ENCODE measurements at regions of chr6 and their contacts with region 1.

Region 1: GRCh38 chr6:106325336-106326178 is at the start of gene ATG5:
- DNase-seq: peak; percentile 99
- ATAC-seq: peak; percentile 98
- H3K4me3 ChIP-seq: peak within 1 kb of the TSS; percentile 99
- H3K4me3 Mint-ChIP-seq: peak within 1 kb of the TSS; percentile 96 to 100 (median 98)
- H3K27ac ChIP-seq: peak within 1 kb of the TSS; percentile 95
- H3K27ac Mint-ChIP-seq: peak within 1 kb of the TSS; percentile 95 to 100 (median 98)
- H3K4me1 ChIP-seq: peaks cover 16 to 24% of the 10 kb centered on the region in 2 donors
- H3K4me1 Mint-ChIP-seq: peaks cover 33 to 56% (median 46%) of the 10 kb centered on the region in 7 donors
- H3K27me3 ChIP-seq: no peaks in the 10 kb centered on the region
- H3K27me3 Mint-ChIP-seq: peaks cover 13 to 30% (median 17%) of the 10 kb centered on the region in 5 donors
- total RNA-seq, gene ATG5: 24.0 to 30.9 (median 27.0) TPM

Region 2: DNA sequence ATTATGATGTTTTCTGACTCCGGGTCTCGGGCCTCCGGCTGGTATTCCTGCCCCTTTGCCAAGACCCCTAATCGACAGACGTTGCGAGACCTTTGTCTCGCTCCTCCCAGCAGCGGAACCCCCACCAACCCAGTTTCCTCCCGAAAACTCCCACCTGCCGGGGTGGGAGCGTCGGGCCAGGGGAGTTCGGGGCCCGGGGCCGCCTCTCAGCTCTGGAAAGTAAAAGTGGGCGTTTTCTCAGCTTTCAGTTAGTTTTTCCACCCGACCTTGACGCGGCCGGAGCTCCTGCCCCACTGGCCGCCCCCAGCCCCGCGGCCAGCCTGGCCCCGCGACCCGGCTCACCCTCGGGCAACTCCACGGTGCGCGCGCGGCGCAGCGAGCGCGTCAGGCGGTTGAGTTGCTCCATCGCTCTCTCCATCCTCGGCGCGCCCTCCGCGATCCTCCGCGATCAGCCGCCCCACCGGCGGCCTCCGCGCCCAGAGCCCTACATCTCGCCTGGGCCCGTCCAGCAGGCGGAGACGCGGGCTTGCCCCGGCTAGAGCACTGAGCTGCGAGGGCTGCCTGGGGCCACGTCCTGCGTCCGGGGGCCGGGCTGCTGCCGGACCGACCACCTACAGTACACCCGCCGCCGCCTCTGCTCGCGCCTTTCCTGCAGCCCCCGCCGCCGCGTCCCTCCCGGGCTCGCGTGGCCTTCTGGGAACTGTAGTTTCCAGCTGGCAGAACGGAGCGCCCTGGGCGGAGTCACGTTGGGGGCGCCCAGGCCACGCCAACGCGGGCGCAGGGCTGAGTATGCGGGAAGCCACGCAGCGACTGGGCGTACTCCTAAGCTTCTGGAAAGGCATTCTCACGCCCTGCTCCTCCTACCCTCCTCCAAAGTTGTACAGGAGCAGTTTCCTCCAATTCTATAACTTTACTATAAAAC is 1466.1 kb before region 1 on chr6 and contains the start of gene HACE1:
- CTCF ChIA-PET with region 1: no interaction called
- POLR2A ChIA-PET with region 1: no interaction called
- intact Hi-C with region 1: loop called in 1 of 2 experiments (anchors 1 kb)
- DNase-seq: peak; percentile 75 to 91 (median 89)
- ATAC-seq: peak; percentile 98
- H3K4me3 ChIP-seq: peak within 1 kb of the TSS; percentile 79
- H3K4me3 Mint-ChIP-seq: peak within 1 kb of the TSS; percentile 87 to 95 (median 92)
- H3K27ac ChIP-seq: peak within 1 kb of the TSS; percentile 69
- H3K27ac Mint-ChIP-seq: peak within 1 kb of the TSS; percentile 18 to 92 (median 86)
- H3K4me1 ChIP-seq: peaks cover 8 to 9% of the 10 kb centered on the region in 2 donors
- H3K4me1 Mint-ChIP-seq: peaks cover 10 to 30% (median 18%) of the 10 kb centered on the region in 7 donors
- H3K27me3 ChIP-seq: no peaks in the 10 kb centered on the region
- H3K27me3 Mint-ChIP-seq: peaks cover 3 to 20% (median 13%) of the 10 kb centered on the region in 5 donors
- total RNA-seq, gene HACE1: 11.4 to 17.1 (median 16.1) TPM

Region 3: GRCh38 chr6:105992315-105992961 is 333.1 kb before region 1 on chr6:
- CTCF ChIA-PET with region 1: no interaction called
- POLR2A ChIA-PET with region 1: no interaction called
- intact Hi-C with region 1: loop called (anchors 1 kb)
- DNase-seq: peak; percentile 82 to 91 (median 89)
- ATAC-seq: peak; percentile 93
- H3K4me3 ChIP-seq: peak overlapping the region; percentile 89
- H3K4me3 Mint-ChIP-seq: peak overlapping the region; percentile 88 to 98 (median 92)
- H3K27ac ChIP-seq: peak overlapping the region; percentile 79
- H3K27ac Mint-ChIP-seq: peak overlapping the region; percentile 87 to 97 (median 93)
- H3K4me1 ChIP-seq: peaks cover 14 to 23% of the 10 kb centered on the region in 2 donors
- H3K4me1 Mint-ChIP-seq: peaks cover 16 to 58% (median 29%) of the 10 kb centered on the region in 7 donors
- H3K27me3 ChIP-seq: peaks cover 0 to 32% of the 10 kb centered on the region in 2 donors
- H3K27me3 Mint-ChIP-seq: peaks cover 48 to 73% (median 62%) of the 10 kb centered on the region in 5 donors

Region 4: DNA sequence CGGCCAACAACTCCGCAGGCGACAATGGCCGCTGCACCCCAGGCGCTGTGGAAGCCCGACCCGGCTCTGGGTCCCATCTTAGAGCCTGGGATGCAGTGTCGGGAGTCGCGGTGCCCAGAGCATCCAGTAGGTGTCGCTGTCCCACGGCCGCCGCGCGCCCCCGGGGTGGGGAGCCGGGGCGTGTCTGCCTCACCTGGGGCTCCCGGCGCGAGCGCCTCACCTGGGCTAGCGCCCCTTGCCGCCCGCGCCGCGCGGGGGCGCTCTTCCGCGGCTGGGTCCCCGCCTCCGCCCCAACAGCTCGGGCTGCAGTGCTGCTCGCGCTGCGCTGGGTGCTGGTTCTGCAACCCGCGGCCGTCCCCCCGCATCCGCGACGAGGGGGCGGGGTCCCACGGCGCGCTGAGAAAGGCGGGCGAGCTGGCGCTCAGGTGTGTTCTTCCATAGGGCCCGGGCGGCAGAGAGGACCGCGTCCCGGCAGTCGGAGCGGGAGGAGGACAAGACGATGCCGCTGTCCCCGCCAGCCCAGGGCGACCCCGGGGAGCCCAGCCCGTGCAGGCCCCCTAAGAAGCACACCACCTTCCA is 34.9 kb after region 1 on chr6 and contains the start of gene CRYBG1:
- CTCF ChIA-PET with region 1: no interaction called
- POLR2A ChIA-PET with region 1: no interaction called
- intact Hi-C with region 1: loop called in 1 of 2 experiments (anchors 1 kb)
- DNase-seq: peak; percentile 60 to 75 (median 72)
- ATAC-seq: peak; percentile 95
- H3K4me3 ChIP-seq: peak within 1 kb of the TSS; percentile 45
- H3K4me3 Mint-ChIP-seq: peak within 1 kb of the TSS; percentile 71 to 86 (median 78)
- H3K27ac ChIP-seq: no peak within 1 kb of the TSS
- H3K27ac Mint-ChIP-seq: peak within 1 kb of the TSS in 2 of 9 donors; percentile 15 to 43
- H3K4me1 ChIP-seq: peaks cover 7 to 8% of the 10 kb centered on the region in 2 donors
- H3K4me1 Mint-ChIP-seq: peaks cover 5 to 15% (median 10%) of the 10 kb centered on the region in 7 donors
- H3K27me3 ChIP-seq: peaks cover 3 to 20% of the 10 kb centered on the region in 2 donors
- H3K27me3 Mint-ChIP-seq: peaks cover 34 to 62% (median 55%) of the 10 kb centered on the region in 5 donors
- total RNA-seq, gene CRYBG1: 18.0 to 39.8 (median 34.6) TPM

Region 5: GRCh38 chr6:106629103-106629858 is 303.7 kb after region 1 on chr6 and contains the starts of genes QRSL1 and RTN4IP1:
- CTCF ChIA-PET with region 1: no interaction called
- POLR2A ChIA-PET with region 1: no interaction called
- intact Hi-C with region 1: loop called (anchors 1 to 2 kb)
- DNase-seq: peak; percentile 67 to 94 (median 90)
- ATAC-seq: peak; percentile 98
- H3K4me3 ChIP-seq: peak within 1 kb of the TSS; percentile 87
- H3K4me3 Mint-ChIP-seq: peak within 1 kb of the TSS; percentile 93 to 100 (median 98)
- H3K27ac ChIP-seq: peak within 1 kb of the TSS; percentile 94
- H3K27ac Mint-ChIP-seq: peak within 1 kb of the TSS; percentile 96 to 99 (median 98)
- H3K4me1 ChIP-seq: peaks cover 7 to 13% of the 10 kb centered on the region in 2 donors
- H3K4me1 Mint-ChIP-seq: peaks cover 13 to 67% (median 38%) of the 10 kb centered on the region in 7 donors
- H3K27me3 ChIP-seq: no peaks in the 10 kb centered on the region
- H3K27me3 Mint-ChIP-seq: no peaks in the 10 kb centered on the region
- total RNA-seq, gene QRSL1: 8.0 to 14.8 (median 13.6) TPM
- total RNA-seq, gene RTN4IP1: 5.1 to 6.4 (median 5.6) TPM

Region 6: GRCh38 chr6:106966229-106966628 is 640.7 kb after region 1 on chr6:
- CTCF ChIA-PET with region 1: no interaction called
- POLR2A ChIA-PET with region 1: no interaction called
- intact Hi-C with region 1: no loop called
- DNase-seq: no peak
- ATAC-seq: no peak
- H3K4me3 ChIP-seq: no peak overlapping the region
- H3K4me3 Mint-ChIP-seq: no peak overlapping the region
- H3K27ac ChIP-seq: no peak overlapping the region
- H3K27ac Mint-ChIP-seq: no peak overlapping the region
- H3K4me1 ChIP-seq: no peaks in the 10 kb centered on the region
- H3K4me1 Mint-ChIP-seq: no peaks in the 10 kb centered on the region
- H3K27me3 ChIP-seq: no peaks in the 10 kb centered on the region
- H3K27me3 Mint-ChIP-seq: peaks cover 17 to 28% (median 24%) of the 10 kb centered on the region in 5 donors

Region 7: GRCh38 chr6:107459283-107460082 is 1133.9 kb after region 1 on chr6 and contains the start of gene PDSS2:
- CTCF ChIA-PET with region 1: no interaction called
- POLR2A ChIA-PET with region 1: no interaction called
- intact Hi-C with region 1: loop called in 1 of 2 experiments (anchors 1 kb)
- DNase-seq: peak; percentile 83 to 98 (median 95)
- ATAC-seq: peak; percentile 100
- H3K4me3 ChIP-seq: peak within 1 kb of the TSS; percentile 95
- H3K4me3 Mint-ChIP-seq: peak within 1 kb of the TSS; percentile 87 to 99 (median 96)
- H3K27ac ChIP-seq: peak within 1 kb of the TSS; percentile 75
- H3K27ac Mint-ChIP-seq: peak within 1 kb of the TSS; percentile 92 to 99 (median 96)
- H3K4me1 ChIP-seq: peaks cover 5% of the 10 kb centered on the region in 2 donors
- H3K4me1 Mint-ChIP-seq: peaks cover 10 to 41% (median 36%) of the 10 kb centered on the region in 7 donors
- H3K27me3 ChIP-seq: no peaks in the 10 kb centered on the region
- H3K27me3 Mint-ChIP-seq: peaks cover 0 to 7% (median 0%) of the 10 kb centered on the region in 5 donors
- total RNA-seq, gene PDSS2: 12.0 to 15.3 (median 12.1) TPM

Measured in naive thymus-derived CD4-positive, alpha-beta T cell (primary cell).